Mammary epithelial cell (primary cell): ENCODE measurements at regions of chr12 and their contacts with region 1.

Region 1: DNA sequence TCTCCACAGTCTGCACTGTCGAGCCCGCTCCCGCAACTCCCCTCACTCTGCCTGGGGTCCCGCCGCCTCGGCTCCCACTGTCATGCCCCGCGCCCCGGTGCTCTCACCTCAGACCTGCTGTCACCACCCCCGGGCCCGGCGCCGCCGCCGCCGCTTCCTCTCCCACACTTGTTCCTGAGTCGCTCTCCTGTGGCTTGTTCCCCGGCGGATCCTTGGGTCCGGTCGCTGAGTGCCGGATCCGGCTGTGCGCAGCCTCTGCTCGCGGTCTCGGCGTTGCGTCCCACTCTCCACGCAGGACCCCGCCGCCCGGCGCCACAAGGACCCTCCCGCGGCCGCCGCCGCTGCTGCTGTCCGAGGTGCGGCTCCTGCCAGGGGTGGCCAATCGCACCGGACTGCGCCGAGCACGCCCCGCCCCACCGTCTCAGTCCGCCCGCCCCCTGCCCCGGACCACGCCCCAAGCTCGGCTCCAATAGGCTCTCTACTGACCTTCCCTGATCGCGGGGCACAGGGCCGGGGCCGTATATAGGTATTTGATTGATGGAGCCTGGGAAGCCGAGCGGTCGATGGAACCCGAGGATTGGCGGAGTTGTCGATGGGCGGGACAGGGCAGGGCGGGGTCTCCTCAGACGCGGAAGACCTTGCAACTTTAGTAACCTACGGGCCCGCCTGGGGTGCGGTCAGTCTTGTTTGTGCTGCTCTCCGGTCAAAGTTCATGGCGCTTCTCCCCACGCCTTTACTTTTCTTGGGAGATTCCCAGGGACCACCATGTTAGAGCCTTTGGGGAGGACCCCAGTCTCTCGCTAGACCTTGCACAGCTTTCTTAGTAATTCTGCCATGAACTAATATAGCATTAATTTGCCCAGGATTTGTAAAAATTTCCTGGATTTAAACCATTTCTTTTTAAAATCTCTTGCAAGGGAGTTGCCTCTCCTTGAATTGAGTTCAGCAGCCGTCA is at the start of gene TAOK3:
- DNase-seq: peak; percentile 98
- H3K4me3 ChIP-seq: peak within 1 kb of the TSS; percentile 97 to 100 (median 98)
- H3K27ac ChIP-seq: peak within 1 kb of the TSS; percentile 72
- H3K4me1 ChIP-seq: peaks cover 28% of the 10 kb centered on the region
- H3K27me3 ChIP-seq: no peaks in the 10 kb centered on the region
- CTCF ChIP-seq: no peak
- total RNA-seq, gene TAOK3: 35.5 to 53.4 TPM

Region 2: GRCh38 chr12:117874842-117875434 is 497.9 kb before region 1 on chr12:
- CTCF ChIA-PET with region 1: no interaction called
- dilution Hi-C with region 1: no loop called
- in situ Hi-C with region 1: no loop called
- intact Hi-C with region 1: loop called (anchors 5 kb)
- DNase-seq: peak; percentile 32
- H3K4me3 ChIP-seq: no peak overlapping the region
- H3K27ac ChIP-seq: no peak overlapping the region
- H3K4me1 ChIP-seq: no peaks in the 10 kb centered on the region
- H3K27me3 ChIP-seq: no peaks in the 10 kb centered on the region
- CTCF ChIP-seq: peak; percentile 70 to 80

Region 3: GRCh38 chr12:118094039-118094438 is 278.8 kb before region 1 on chr12:
- CTCF ChIA-PET with region 1: no interaction called
- dilution Hi-C with region 1: no loop called
- in situ Hi-C with region 1: no loop called
- intact Hi-C with region 1: no loop called
- DNase-seq: no peak
- H3K4me3 ChIP-seq: no peak overlapping the region
- H3K27ac ChIP-seq: no peak overlapping the region
- H3K4me1 ChIP-seq: peaks cover under 1% of the 10 kb centered on the region
- H3K27me3 ChIP-seq: no peaks in the 10 kb centered on the region
- CTCF ChIP-seq: no peak

Region 4: GRCh38 chr12:118145113-118145797 is 227.6 kb before region 1 on chr12:
- CTCF ChIA-PET with region 1: interaction called, 4 read pairs
- dilution Hi-C with region 1: loop called (anchors 10 kb)
- in situ Hi-C with region 1: no loop called
- intact Hi-C with region 1: no loop called
- DNase-seq: no peak
- H3K4me3 ChIP-seq: no peak overlapping the region
- H3K27ac ChIP-seq: no peak overlapping the region
- H3K4me1 ChIP-seq: no peaks in the 10 kb centered on the region
- H3K27me3 ChIP-seq: no peaks in the 10 kb centered on the region
- CTCF ChIP-seq: no peak

Region 5: GRCh38 chr12:118189741-118190191 is 183.1 kb before region 1 on chr12:
- CTCF ChIA-PET with region 1: interaction called, 3 read pairs
- dilution Hi-C with region 1: loop called (anchors 5 kb)
- in situ Hi-C with region 1: loop called (anchors 5 to 10 kb)
- intact Hi-C with region 1: no loop called
- DNase-seq: peak; percentile 32
- H3K4me3 ChIP-seq: peak overlapping the region; percentile 31 to 44 (median 34)
- H3K27ac ChIP-seq: peak overlapping the region; percentile 66
- H3K4me1 ChIP-seq: peaks cover 34% of the 10 kb centered on the region
- H3K27me3 ChIP-seq: no peaks in the 10 kb centered on the region
- CTCF ChIP-seq: no peak

Region 6: GRCh38 chr12:118299791-118300460 is 72.9 kb before region 1 on chr12:
- CTCF ChIA-PET with region 1: interaction called, 3 read pairs
- dilution Hi-C with region 1: no loop called
- in situ Hi-C with region 1: no loop called
- intact Hi-C with region 1: loop called (anchors 1 kb)
- DNase-seq: no peak
- H3K4me3 ChIP-seq: no peak overlapping the region
- H3K27ac ChIP-seq: no peak overlapping the region
- H3K4me1 ChIP-seq: peaks cover 16% of the 10 kb centered on the region
- H3K27me3 ChIP-seq: no peaks in the 10 kb centered on the region
- CTCF ChIP-seq: no peak

Region 7: GRCh38 chr12:119412811-119413794 is 1040.3 kb after region 1 on chr12:
- CTCF ChIA-PET with region 1: no interaction called
- dilution Hi-C with region 1: no loop called
- in situ Hi-C with region 1: no loop called
- intact Hi-C with region 1: loop called (anchors 1 kb)
- DNase-seq: peak; percentile 28
- H3K4me3 ChIP-seq: no peak overlapping the region
- H3K27ac ChIP-seq: no peak overlapping the region
- H3K4me1 ChIP-seq: no peaks in the 10 kb centered on the region
- H3K27me3 ChIP-seq: no peaks in the 10 kb centered on the region
- CTCF ChIP-seq: peak; percentile 73 to 79